SK-N-SH (cell line): ENCODE measurements at regions of chr3 and their contacts with region 1.

Region 1: DNA sequence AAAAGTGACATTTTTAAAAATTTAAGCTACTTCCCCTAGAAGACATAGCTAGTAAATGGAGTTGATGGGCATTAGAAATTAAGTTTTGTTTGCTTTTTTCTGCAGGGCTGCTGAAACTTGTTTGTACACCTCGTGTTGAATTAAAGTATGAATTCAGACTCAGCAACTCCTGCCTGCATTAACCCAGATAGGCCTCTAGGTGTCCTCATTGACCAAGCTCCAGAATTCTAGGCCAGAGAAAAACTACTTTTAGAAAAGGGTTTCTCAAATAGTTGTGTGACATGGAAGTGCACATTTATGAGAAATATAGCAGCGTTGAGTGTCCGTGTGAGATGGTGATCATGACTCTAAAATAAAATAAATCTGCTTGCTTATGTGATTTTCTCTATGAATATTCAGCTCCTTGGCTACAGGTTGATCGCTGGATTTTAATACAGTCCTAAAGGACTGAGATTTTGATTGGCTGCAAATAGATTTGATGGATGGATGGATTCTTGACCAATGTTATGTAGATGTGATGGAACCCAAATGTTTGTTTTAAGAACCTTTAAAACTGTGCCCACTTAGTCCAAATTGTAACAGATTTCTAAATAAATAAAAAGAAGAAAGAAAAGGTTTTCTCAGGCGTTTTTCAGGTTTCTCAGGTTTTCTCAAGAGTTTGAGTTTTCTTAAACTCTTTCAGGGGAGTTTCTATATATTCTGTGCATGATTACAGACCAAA is 39.4 kb upstream of the LMOD3 start:
- DNase-seq: peak; percentile 51
- H3K4me3 ChIP-seq: peak overlapping the region in 1 of 2 experiments; percentile 30; a peak in 1 of 4 replicates
- H3K27ac ChIP-seq: no peak overlapping the region
- H3K4me1 ChIP-seq: no peaks in the 10 kb centered on the region
- H3K27me3 ChIP-seq: no peaks in the 10 kb centered on the region
- CTCF ChIP-seq: peak; percentile 98
- EP300 ChIP-seq: no peak
- RAD21 ChIP-seq: peak; percentile 99

Region 2: DNA sequence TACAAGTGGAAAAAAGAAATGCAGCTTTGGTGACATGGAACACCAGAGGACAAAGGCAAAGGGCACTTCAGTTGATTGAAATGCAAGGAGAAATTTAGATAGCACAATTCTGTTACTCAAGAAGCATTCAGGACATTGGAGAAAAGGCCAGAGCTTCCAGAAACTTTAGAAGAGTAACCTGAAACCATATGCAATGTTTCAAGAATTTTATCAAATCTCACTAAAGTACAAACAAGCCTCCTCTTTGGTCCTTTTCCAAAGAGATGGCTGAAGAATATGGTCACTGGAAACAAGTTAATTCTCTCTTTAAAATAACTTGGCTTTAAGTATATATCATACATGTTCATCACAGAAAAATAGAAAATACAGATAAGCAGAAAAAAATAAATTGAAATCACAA is 24.7 kb before region 1 on chr3:
- CTCF ChIA-PET with region 1: interaction called, 15 read pairs
- POLR2A ChIA-PET with region 1: no interaction called
- DNase-seq: no peak
- H3K4me3 ChIP-seq: no peak overlapping the region
- H3K27ac ChIP-seq: no peak overlapping the region
- H3K4me1 ChIP-seq: no peaks in the 10 kb centered on the region
- H3K27me3 ChIP-seq: no peaks in the 10 kb centered on the region
- CTCF ChIP-seq: no peak
- EP300 ChIP-seq: no peak
- RAD21 ChIP-seq: no peak

Region 3: GRCh38 chr3:69181592-69182211 is 20.0 kb after region 1 on chr3:
- CTCF ChIA-PET with region 1: interaction called, 55 read pairs
- POLR2A ChIA-PET with region 1: no interaction called
- DNase-seq: no peak
- H3K4me3 ChIP-seq: peak overlapping the region in 1 of 2 experiments; percentile 43; a peak in 1 of 4 replicates
- H3K27ac ChIP-seq: peak overlapping the region in 1 of 2 experiments; percentile 88; a peak in 2 of 4 replicates
- H3K4me1 ChIP-seq: peaks cover 0 to 17% of the 10 kb centered on the region in 2 experiments; a peak in 1 of 4 replicates
- H3K27me3 ChIP-seq: no peaks in the 10 kb centered on the region
- CTCF ChIP-seq: no peak
- EP300 ChIP-seq: no peak
- RAD21 ChIP-seq: no peak

Region 4: DNA sequence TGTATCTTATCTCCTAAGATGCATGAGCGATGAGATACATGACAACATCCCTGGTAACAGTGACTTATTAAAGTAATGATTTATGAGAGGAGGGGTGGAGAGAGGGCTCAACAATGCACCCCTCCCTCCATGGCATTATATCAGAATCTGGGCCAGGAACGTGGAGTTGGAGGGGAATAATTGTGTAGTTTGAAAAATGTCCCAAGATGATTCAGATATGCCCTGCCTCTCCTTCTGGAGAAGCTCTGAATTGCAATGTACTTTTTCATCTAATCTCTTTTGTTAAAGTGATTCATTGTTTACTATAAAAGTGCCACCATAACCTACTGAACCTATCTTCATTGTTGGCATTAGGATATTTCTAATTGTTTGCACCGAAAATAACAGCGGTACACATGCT is 137.6 kb after region 1 on chr3:
- CTCF ChIA-PET with region 1: interaction called, 315 read pairs
- POLR2A ChIA-PET with region 1: no interaction called
- DNase-seq: no peak
- H3K4me3 ChIP-seq: no peak overlapping the region
- H3K27ac ChIP-seq: no peak overlapping the region
- H3K4me1 ChIP-seq: peaks cover 0 to 20% of the 10 kb centered on the region in 2 experiments; a peak in 2 of 4 replicates
- H3K27me3 ChIP-seq: no peaks in the 10 kb centered on the region
- CTCF ChIP-seq: peak; percentile 39
- EP300 ChIP-seq: no peak
- RAD21 ChIP-seq: no peak

Region 5: GRCh38 chr3:69410250-69410649 is 248.5 kb after region 1 on chr3:
- CTCF ChIA-PET with region 1: interaction called, 46 read pairs
- POLR2A ChIA-PET with region 1: no interaction called
- DNase-seq: peak; percentile 54
- H3K4me3 ChIP-seq: no peak overlapping the region
- H3K27ac ChIP-seq: peak overlapping the region in 1 of 2 experiments; percentile 8; a peak in 1 of 4 replicates
- H3K4me1 ChIP-seq: peaks cover 2 to 8% of the 10 kb centered on the region in 2 experiments; a peak in 3 of 4 replicates
- H3K27me3 ChIP-seq: no peaks in the 10 kb centered on the region
- CTCF ChIP-seq: peak; percentile 82
- EP300 ChIP-seq: no peak
- RAD21 ChIP-seq: peak; percentile 79

Region 6: DNA sequence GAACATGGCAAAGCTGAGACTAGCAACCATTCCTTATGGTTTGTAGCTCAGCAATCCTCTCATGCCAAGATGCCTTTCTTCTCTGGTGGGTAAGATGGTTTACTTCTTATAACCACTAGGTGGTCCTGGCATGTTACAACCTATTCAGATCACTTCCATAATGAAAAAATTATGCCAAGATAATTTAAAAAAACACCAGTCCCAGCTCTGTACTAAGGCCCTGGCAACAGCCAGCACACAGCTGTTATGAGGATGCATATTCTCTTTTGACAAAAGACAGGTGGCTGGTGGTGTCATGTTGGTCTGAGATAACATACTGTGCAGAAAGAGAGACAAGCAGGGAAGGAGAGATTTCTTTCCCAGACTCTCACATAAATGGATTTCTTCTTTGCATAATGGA is 289.8 kb after region 1 on chr3:
- CTCF ChIA-PET with region 1: interaction called, 12 read pairs
- POLR2A ChIA-PET with region 1: no interaction called
- DNase-seq: peak; percentile 78
- H3K4me3 ChIP-seq: no peak overlapping the region
- H3K27ac ChIP-seq: peak overlapping the region in 1 of 2 experiments; percentile 94; a peak in 2 of 4 replicates
- H3K4me1 ChIP-seq: peaks cover 0 to 36% of the 10 kb centered on the region in 2 experiments; a peak in 2 of 4 replicates
- H3K27me3 ChIP-seq: no peaks in the 10 kb centered on the region
- CTCF ChIP-seq: peak; percentile 45
- EP300 ChIP-seq: peak in 1 of 2 experiments; percentile 98; a peak in 2 of 4 replicates
- RAD21 ChIP-seq: peak; percentile 76

Region 7: DNA sequence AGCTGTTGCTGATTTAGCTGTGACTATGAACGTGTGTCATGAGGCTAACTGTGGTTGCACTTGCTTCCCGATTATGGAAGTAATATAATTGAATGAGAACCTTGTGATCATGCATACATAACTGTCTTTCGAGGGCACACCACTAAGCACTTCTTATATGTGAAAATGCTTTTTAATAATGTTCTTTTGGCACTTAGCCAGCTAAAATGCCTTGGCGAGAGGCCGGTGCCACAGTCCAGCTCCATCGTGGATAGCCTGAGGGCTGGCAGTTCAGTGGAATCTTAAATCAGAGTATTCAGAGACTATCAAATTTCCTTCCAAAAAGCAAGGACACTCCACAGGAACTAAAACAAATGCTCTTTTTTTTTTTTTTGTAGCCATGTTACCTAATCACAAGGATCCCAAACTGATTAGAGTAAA is 385.7 kb after region 1 on chr3:
- CTCF ChIA-PET with region 1: no interaction called
- POLR2A ChIA-PET with region 1: no interaction called
- DNase-seq: peak; percentile 36
- H3K4me3 ChIP-seq: no peak overlapping the region
- H3K27ac ChIP-seq: no peak overlapping the region
- H3K4me1 ChIP-seq: peaks cover 0 to 5% of the 10 kb centered on the region in 2 experiments; a peak in 2 of 4 replicates
- H3K27me3 ChIP-seq: peaks cover 10% of the 10 kb centered on the region; the same call in 1 of the 2 replicates
- CTCF ChIP-seq: no peak
- EP300 ChIP-seq: no peak
- RAD21 ChIP-seq: no peak

Region 8: DNA sequence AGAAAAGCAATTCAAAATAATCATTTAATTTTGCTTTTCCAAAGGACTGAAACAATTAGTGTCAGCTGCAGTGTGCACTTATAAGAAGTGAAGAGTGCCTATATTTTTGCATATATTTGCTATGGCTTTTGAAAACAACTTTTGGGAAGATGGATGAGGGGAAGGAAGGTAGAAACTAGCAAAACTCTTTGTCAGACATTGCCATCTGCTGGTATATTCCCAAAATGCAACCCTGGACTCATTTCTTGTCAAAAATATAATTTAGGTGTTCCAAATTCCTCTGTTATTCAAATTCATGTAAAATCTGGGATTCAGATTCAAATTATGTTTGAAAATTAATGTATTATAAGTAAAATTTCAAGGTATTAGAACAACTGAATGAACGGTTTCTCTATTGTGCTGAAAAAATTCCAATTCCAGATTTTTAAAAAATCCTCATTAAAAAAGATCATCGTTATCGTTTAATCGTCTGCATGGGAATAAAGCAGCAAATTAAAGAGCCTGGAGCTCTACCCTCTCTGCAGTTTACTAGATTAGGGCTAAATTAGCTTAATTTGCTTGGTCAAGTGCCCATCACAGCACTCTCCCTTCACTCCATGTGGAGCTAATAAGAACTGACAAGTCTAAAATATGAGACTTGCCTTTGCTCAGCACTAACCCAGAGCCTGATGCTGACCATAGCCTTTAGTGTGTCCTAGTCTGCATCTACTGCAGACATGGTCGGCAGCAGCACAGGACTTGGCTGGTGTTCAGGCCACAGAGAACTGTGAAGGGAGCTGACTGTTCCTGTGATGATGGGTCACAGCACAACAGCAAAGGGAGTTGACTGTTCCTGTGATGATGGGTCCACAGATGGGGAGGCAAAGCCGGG is 509.6 kb after region 1 on chr3:
- CTCF ChIA-PET with region 1: interaction called, 51 read pairs
- POLR2A ChIA-PET with region 1: no interaction called
- DNase-seq: peak; percentile 68
- H3K4me3 ChIP-seq: no peak overlapping the region; a peak in 2 of 4 replicates
- H3K27ac ChIP-seq: peak overlapping the region in 1 of 2 experiments; percentile 83; a peak in 2 of 4 replicates
- H3K4me1 ChIP-seq: peaks cover 0 to 13% of the 10 kb centered on the region in 2 experiments; a peak in 2 of 4 replicates
- H3K27me3 ChIP-seq: no peaks in the 10 kb centered on the region
- CTCF ChIP-seq: peak; percentile 85
- EP300 ChIP-seq: peak in 1 of 2 experiments; percentile 91; a peak in 2 of 4 replicates
- RAD21 ChIP-seq: peak; percentile 91

Region 9: DNA sequence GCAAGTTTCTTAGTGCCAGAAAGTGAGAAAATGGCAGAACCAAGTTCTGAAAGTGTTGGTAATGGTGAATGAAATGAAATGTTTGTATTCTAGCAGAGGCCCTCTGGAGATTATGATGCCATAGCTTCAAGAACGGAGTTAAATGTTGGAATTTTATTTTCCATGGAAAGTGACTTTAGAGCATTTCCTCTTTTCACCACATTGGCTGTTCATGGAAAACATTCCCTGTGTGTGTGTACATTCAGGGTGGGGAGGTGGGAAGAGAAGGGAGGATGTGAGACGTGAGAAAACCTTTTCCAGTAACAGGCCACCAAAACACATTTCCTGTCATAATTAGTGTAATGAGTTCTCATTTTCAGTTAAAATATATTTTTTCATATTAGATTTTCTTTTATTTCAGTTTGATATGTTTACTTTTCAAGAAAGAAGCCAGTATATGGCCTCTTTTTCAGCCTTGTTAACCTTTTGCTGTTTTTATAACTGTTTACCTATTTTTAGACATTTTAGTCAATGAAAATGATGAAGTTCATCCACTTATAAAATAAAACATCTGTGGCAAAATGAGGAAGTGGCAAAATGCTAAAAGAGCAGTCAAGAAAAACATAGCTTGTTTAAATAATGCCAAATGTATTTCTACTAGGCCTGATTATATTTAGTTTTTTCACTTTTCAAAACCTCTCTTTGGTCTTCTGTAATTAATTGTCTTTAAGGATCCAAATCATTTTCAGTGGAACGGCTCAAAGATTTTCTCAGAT is 859.3 kb after region 1 on chr3:
- CTCF ChIA-PET with region 1: no interaction called
- POLR2A ChIA-PET with region 1: no interaction called
- DNase-seq: no peak
- H3K4me3 ChIP-seq: no peak overlapping the region
- H3K27ac ChIP-seq: no peak overlapping the region
- H3K4me1 ChIP-seq: no peaks in the 10 kb centered on the region
- H3K27me3 ChIP-seq: no peaks in the 10 kb centered on the region
- CTCF ChIP-seq: no peak
- EP300 ChIP-seq: no peak
- RAD21 ChIP-seq: no peak